ENCODE measurements at regions of chr6 and their contacts with region 1.

Region 1: DNA sequence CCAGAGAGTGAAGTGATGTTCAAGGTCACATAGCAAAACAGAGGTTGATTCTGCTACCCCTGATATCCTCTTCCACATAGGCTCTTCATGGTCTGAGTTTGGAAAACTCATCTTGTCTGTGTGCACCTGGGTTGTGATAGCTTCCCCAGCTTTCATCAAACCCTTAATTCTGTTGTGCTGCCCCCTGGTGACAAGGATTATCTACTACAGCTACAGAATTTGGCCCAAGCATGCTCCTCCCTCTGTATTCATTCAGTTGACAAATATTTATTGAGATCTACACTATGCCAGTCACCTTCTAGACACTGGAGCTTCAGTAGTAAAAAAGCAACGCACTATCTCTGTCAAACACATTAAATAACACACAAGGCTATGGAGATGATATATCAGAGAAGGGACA is 50.4 kb downstream of the SMPDL3A start:
- DNase-seq: peak; percentile 46 to 60
- ATAC-seq: peak; percentile 90 to 92
- H3K4me3 ChIP-seq: no peak overlapping the region
- H3K27ac ChIP-seq: no peak overlapping the region
- H3K4me1 ChIP-seq: no peaks in the 10 kb centered on the region
- CTCF ChIP-seq: peak; percentile 55
- EP300 ChIP-seq: no peak
- POLR2A ChIP-seq: no peak
- RAD21 ChIP-seq: peak; percentile 47 to 62

Region 2: DNA sequence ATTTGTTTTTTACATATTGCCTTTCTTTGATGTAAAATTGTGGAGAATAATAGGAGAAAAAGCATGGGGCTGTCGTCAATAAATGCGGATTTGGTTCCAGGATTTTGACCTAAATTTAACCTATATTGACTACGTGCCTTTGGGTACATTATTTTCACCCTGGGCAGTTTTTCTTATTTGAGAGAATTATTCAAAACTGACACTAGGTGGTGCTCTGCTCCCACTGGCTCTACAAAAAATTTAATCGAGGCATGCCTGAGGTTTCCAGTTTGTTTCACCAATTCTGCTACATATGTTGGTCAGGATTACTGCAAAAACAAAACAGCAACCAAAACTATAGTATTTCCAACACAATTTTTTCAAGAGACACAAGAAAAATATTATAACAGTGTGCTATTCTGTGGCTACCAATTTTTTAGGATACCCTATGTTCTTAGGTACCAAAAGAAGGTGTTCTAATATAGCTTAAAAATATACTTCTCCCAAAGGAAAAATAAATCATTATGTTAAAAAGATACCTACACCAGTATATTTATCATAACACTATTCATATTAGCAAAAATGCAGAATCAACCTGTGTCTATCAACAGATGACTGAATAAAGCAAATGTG is 108.6 kb before region 1 on chr6:
- CTCF ChIA-PET with region 1: interaction called, 76 read pairs
- POLR2A ChIA-PET with region 1: no interaction called
- DNase-seq: peak in 1 of 2 experiments; percentile 6
- ATAC-seq: peak in 1 of 2 experiments; percentile 55; a peak in 2 of 6 replicates
- H3K4me3 ChIP-seq: no peak overlapping the region
- H3K27ac ChIP-seq: no peak overlapping the region
- H3K4me1 ChIP-seq: no peaks in the 10 kb centered on the region
- CTCF ChIP-seq: peak; percentile 82
- EP300 ChIP-seq: no peak
- POLR2A ChIP-seq: no peak
- RAD21 ChIP-seq: peak; percentile 79 to 83

Region 3: DNA sequence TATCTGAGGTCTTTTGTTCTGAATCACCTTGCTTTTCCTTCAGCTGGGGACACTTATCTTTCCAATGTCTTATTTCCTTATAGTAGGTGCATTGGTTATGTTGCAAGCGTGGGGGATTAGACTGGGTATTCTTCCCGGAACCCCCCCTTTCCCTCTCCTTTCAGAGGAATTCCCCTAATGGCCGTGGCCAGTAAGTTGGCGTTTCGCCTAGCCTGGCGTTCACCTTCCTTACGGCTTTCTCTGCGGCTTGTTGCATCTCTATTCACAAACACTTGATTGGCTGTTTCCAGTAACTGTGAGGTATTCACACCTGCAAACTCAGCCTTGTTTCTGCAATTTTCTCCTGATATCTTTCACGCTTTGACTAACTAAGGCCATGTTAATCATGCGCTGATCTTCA is 92.8 kb before region 1 on chr6:
- CTCF ChIA-PET with region 1: interaction called, 19 read pairs
- POLR2A ChIA-PET with region 1: no interaction called
- DNase-seq: no peak
- ATAC-seq: no peak
- H3K4me3 ChIP-seq: no peak overlapping the region
- H3K27ac ChIP-seq: no peak overlapping the region
- H3K4me1 ChIP-seq: no peaks in the 10 kb centered on the region
- CTCF ChIP-seq: no peak
- EP300 ChIP-seq: no peak
- POLR2A ChIP-seq: no peak
- RAD21 ChIP-seq: no peak

Region 4: GRCh38 chr6:122789182-122790027 is 50.1 kb before region 1 on chr6 and contains the start of gene SMPDL3A:
- CTCF ChIA-PET with region 1: interaction called, 14 read pairs
- POLR2A ChIA-PET with region 1: interaction called, 4 read pairs
- DNase-seq: peak; percentile 46 to 73
- ATAC-seq: peak; percentile 89 to 92
- H3K4me3 ChIP-seq: peak within 1 kb of the TSS; percentile 51
- H3K27ac ChIP-seq: peak within 1 kb of the TSS; percentile 85 to 95
- H3K4me1 ChIP-seq: peaks cover 14% of the 10 kb centered on the region; the same call in 1 of the 3 replicates
- CTCF ChIP-seq: peak; percentile 58
- EP300 ChIP-seq: no peak
- POLR2A ChIP-seq: peak; percentile 37
- RAD21 ChIP-seq: peak in 1 of 2 experiments; percentile 35; a peak in 2 of 5 replicates
- polyA plus RNA-seq, gene SMPDL3A: 3.3 and 3.6 TPM in 2 replicates

Region 5: DNA sequence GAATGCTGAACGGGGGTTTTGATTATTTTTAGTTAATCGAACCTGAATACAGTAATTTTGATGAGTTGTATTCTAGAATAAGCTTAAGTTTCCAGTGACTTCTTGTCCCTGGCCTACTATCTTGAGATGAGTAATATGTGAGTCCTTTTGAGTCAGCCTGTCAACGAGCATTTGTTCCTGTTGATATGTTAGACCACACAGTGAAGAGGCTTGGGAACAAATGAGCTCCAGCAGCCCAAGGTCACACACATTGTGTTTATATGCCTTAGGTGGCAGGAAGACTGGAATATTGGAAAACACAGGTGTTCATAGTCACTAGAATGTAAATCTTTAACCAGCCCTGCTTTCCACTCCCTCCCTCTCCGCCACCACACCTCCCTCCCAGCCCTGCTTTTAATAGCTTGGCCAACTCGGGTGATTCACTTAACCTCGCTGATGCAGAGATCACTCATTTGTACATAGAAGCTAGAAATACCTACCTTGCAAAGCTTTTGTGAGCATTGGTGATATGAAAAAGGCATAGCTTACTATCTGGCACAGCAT is 41.3 kb before region 1 on chr6:
- CTCF ChIA-PET with region 1: interaction called, 10 read pairs
- POLR2A ChIA-PET with region 1: no interaction called
- DNase-seq: peak; percentile 15 to 59
- ATAC-seq: peak; percentile 88 to 96
- H3K4me3 ChIP-seq: no peak overlapping the region
- H3K27ac ChIP-seq: peak overlapping the region in 1 of 2 experiments; percentile 28; a peak in 1 of 6 replicates
- H3K4me1 ChIP-seq: peaks cover 32% of the 10 kb centered on the region
- CTCF ChIP-seq: no peak
- EP300 ChIP-seq: no peak
- POLR2A ChIP-seq: no peak
- RAD21 ChIP-seq: no peak

Measured in A549 (cell line).